ENCODE measurements at regions of chr6 and their contacts with region 1.

Region 1: GRCh38 chr6:149925974-149926777 is 3.3 kb upstream of the RAET1G start:
- DNase-seq: peak; percentile 87 to 96 (median 95)
- H3K4me3 ChIP-seq: peak overlapping the region in 2 of 4 donors; percentile 22 to 63
- H3K27ac ChIP-seq: peak overlapping the region in 2 of 5 donors; percentile 41 to 54
- H3K4me1 ChIP-seq: peaks cover 10 to 16% of the 10 kb centered on the region in 2 donors
- H3K27me3 ChIP-seq: peaks cover 20% of the 10 kb centered on the region
- CTCF ChIP-seq: peak; percentile 86 to 100 (median 98)
- POLR2A ChIP-seq: no peak

Region 2: DNA sequence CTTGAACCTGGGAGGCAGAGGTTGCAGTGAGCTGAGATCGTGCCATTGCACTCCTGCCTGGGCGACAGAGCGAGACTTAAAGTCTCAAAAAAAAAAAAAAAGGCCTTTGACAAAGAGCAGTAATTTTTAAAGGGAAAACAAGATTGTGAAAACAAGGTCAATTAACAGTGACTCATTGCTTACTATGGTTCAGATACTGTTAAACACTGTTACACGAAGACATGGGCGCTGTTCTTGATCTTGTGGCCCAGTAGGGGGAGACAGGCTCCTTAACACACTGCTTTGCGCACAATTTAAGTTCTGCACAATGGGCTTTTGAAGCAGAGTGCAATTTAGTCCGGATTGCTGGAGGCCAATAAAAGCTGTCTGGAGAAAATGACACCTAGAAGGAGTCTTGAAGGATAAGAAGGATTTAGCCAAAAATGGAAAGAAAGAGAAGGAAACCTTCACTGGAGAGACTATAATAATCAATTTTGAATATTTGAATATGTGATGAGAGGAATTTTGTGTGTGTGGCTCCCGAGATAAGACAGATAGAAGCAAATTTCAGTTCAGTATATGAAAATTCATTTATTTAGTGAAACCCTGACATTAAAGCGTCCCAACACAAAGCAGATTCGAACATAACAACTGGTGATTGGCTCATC is 202.3 kb before region 1 on chr6:
- intact Hi-C with region 1: loop called in 1 of 2 experiments (anchors 10 kb)
- DNase-seq: peak; percentile 63 to 83 (median 74)
- H3K4me3 ChIP-seq: no peak overlapping the region
- H3K27ac ChIP-seq: peak overlapping the region in 3 of 5 donors; percentile 37 to 46 (median 40)
- H3K4me1 ChIP-seq: peaks cover 0 to under 1% of the 10 kb centered on the region in 2 donors
- H3K27me3 ChIP-seq: no peaks in the 10 kb centered on the region
- CTCF ChIP-seq: peak; percentile 69 to 88 (median 78)
- POLR2A ChIP-seq: no peak

Region 3: GRCh38 chr6:149834513-149835481 is 91.4 kb before region 1 on chr6:
- intact Hi-C with region 1: loop called (anchors 5 kb)
- DNase-seq: peak; percentile 35 to 88 (median 64)
- H3K4me3 ChIP-seq: no peak overlapping the region
- H3K27ac ChIP-seq: no peak overlapping the region
- H3K4me1 ChIP-seq: no peaks in the 10 kb centered on the region
- H3K27me3 ChIP-seq: no peaks in the 10 kb centered on the region
- CTCF ChIP-seq: peak; percentile 88 to 95 (median 92)
- POLR2A ChIP-seq: no peak

Region 4: DNA sequence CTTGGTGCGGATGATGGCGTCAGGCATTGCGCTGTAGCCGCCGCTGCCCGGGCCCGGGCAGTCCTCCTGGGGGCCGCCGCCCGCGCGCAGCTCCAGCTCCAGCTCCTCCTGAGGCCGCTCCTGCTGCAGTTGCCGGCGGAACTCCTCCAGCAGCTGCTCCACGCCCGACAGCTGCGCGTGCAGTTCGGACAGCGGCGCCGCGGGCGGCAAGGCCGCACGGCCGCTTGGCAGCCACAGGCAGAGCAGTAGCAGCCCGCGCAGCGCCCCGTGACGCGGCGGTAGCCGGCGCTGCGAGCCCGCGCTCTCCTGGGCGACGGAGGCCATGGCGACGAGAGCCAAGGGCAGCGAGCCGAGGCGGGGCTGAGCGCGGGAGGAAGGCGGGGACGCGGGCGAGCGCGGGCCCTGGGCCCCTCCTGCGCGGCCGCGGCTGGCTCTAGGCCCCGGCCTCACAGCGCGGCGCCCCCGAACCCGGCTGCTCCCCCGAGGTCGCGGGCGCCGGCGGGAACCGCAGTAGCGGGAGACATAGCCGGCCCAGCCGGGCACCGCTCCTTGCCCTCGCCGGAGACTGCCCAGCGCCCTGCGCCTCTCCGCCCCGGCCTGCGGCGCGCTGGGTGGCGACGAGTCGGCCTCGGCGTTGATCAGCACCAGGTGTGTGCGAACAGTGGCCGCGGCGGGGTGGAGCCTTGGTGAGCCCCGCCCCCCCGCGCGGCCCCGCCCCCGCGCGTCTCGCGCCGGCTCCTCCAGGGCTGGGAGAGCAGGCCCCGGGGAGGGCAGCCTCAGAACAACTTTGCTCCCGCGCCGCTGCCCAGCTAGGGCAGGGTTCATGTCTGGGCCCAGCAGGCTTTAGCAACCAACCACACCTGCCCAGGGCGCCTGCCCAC is 62.2 kb before region 1 on chr6 and contains the start of gene LRP11:
- intact Hi-C with region 1: loop called (anchors 10 kb)
- DNase-seq: peak; percentile 85 to 96 (median 90)
- H3K4me3 ChIP-seq: peak within 1 kb of the TSS; percentile 12 to 85 (median 56)
- H3K27ac ChIP-seq: peak within 1 kb of the TSS; percentile 87 to 98 (median 91)
- H3K4me1 ChIP-seq: peaks cover 3 to 25% of the 10 kb centered on the region in 2 donors
- H3K27me3 ChIP-seq: no peaks in the 10 kb centered on the region
- CTCF ChIP-seq: no peak
- POLR2A ChIP-seq: peak; percentile 68 to 87
- total RNA-seq, gene LRP11: 7.8 to 59.9 (median 44.0) TPM

Region 5: GRCh38 chr6:150134280-150134936 is 208.2 kb after region 1 on chr6:
- intact Hi-C with region 1: no loop called
- DNase-seq: no peak
- H3K4me3 ChIP-seq: no peak overlapping the region
- H3K27ac ChIP-seq: no peak overlapping the region
- H3K4me1 ChIP-seq: no peaks in the 10 kb centered on the region
- H3K27me3 ChIP-seq: no peaks in the 10 kb centered on the region
- CTCF ChIP-seq: no peak
- POLR2A ChIP-seq: no peak

Region 6: DNA sequence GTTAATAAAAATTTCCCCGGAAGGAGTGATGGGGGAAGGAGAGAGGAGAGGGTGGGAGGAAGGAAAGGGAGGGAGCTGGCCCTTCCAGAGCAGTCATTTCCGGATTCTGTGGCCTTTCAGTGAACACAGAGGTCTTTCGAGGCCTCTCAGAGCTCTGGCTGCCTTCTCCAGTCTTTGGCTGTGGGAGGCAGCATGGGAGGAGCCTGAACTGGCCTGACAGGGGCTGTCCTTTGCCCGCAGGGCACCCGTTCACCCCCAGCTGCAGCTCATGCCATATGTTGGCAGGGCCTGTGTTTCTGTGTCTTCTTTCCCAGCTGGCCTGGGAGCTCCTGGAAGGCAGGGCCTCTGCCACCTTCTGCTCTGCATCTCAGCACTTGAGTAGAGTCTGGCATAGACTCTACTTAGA is 312.2 kb after region 1 on chr6:
- intact Hi-C with region 1: no loop called
- DNase-seq: peak in 3 of 7 donors; percentile 6 to 20 (median 19)
- H3K4me3 ChIP-seq: no peak overlapping the region
- H3K27ac ChIP-seq: no peak overlapping the region
- H3K4me1 ChIP-seq: no peaks in the 10 kb centered on the region
- H3K27me3 ChIP-seq: no peaks in the 10 kb centered on the region
- CTCF ChIP-seq: no peak
- POLR2A ChIP-seq: no peak

Region 7: GRCh38 chr6:150377211-150377781 is 451.1 kb after region 1 on chr6:
- intact Hi-C with region 1: no loop called
- DNase-seq: peak in 2 of 7 donors; percentile 13 to 18
- H3K4me3 ChIP-seq: no peak overlapping the region
- H3K27ac ChIP-seq: no peak overlapping the region
- H3K4me1 ChIP-seq: no peaks in the 10 kb centered on the region
- H3K27me3 ChIP-seq: no peaks in the 10 kb centered on the region
- CTCF ChIP-seq: no peak
- POLR2A ChIP-seq: no peak